ENCODE measurements at regions of chr12 and their contacts with region 1.

Region 1: GRCh38 chr12:120361506-120362208 is 7.3 kb downstream of the MSI1 start:
- DNase-seq: peak; percentile 54 to 76 (median 76)
- H3K4me3 ChIP-seq: peak overlapping the region; percentile 41
- H3K27ac ChIP-seq: peak overlapping the region in 1 of 2 donors; percentile 7
- H3K4me1 ChIP-seq: peaks cover 1% of the 10 kb centered on the region
- H3K27me3 ChIP-seq: no peaks in the 10 kb centered on the region
- CTCF ChIP-seq: no peak
- EP300 ChIP-seq: no peak
- POLR2A ChIP-seq: no peak

Region 2: DNA sequence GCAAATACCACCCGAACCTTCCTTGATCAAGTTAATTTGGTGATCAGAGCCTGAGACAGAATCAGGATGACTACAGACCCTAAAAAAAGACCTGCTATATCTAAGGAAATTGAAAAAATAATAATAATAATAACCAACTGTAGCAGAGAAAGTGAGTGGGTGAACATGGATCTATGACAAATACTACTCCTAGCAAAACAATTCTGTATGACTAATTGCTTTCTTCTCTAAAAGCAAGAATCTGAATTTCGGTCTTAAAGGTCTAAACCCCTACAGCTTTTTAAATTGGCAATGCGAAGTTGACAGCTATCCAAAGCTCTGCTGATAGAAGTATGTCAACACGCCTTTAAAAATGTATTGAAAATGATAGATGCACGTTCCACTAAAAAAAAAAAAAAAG is 591.5 kb before region 1 on chr12:
- intact Hi-C with region 1: no loop called
- DNase-seq: no peak
- H3K4me3 ChIP-seq: no peak overlapping the region
- H3K27ac ChIP-seq: no peak overlapping the region
- H3K4me1 ChIP-seq: no peaks in the 10 kb centered on the region
- H3K27me3 ChIP-seq: no peaks in the 10 kb centered on the region
- CTCF ChIP-seq: no peak
- EP300 ChIP-seq: no peak
- POLR2A ChIP-seq: no peak

Region 3: DNA sequence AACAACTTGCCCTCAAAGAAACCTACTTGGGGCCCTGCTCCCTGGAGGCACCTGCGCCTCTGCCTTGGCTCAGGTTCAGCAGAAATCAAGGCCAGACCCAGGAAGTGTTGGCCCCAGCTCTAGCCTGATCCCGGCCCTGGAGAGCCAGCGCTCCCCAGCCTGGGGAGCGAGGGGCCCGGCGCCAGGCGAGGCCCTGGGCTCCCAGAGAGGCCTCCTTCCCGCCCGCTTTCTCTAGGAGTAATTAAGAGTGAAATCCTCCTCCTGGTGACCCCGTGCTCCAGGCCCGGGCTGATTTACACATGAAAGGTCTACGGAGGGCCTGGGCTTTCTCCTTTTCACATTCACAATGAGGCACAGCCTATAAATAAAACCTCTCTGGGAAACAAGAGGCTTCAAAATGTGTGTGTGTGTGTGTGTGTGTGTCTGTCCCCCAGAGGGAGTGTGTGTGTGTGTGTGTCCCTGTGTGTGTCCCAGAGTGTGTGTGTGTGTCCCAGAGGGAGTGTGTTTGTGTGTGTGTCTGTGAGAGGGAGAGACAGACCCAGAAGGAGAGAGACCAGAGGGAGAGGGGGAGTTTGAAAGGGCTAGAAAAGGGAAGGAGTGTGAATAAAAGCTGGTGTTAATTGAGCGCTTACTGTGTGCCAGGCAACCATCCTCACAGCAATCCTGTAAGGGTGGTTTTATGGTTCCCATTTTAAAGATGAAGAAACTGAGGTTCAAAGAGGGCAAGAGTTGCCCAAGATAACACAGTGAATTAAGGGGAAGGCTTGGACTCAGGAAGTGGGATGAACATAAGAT is 52.4 kb after region 1 on chr12:
- intact Hi-C with region 1: loop called in 1 of 4 experiments (anchors 10 kb)
- DNase-seq: no peak
- H3K4me3 ChIP-seq: no peak overlapping the region
- H3K27ac ChIP-seq: no peak overlapping the region
- H3K4me1 ChIP-seq: no peaks in the 10 kb centered on the region
- H3K27me3 ChIP-seq: no peaks in the 10 kb centered on the region
- CTCF ChIP-seq: no peak
- EP300 ChIP-seq: no peak
- POLR2A ChIP-seq: no peak

Measured in ovary (tissue), 10 donors.